MCF 10A (cell line): ENCODE measurements at regions of chr1 and their contacts with region 1.

Region 1: DNA sequence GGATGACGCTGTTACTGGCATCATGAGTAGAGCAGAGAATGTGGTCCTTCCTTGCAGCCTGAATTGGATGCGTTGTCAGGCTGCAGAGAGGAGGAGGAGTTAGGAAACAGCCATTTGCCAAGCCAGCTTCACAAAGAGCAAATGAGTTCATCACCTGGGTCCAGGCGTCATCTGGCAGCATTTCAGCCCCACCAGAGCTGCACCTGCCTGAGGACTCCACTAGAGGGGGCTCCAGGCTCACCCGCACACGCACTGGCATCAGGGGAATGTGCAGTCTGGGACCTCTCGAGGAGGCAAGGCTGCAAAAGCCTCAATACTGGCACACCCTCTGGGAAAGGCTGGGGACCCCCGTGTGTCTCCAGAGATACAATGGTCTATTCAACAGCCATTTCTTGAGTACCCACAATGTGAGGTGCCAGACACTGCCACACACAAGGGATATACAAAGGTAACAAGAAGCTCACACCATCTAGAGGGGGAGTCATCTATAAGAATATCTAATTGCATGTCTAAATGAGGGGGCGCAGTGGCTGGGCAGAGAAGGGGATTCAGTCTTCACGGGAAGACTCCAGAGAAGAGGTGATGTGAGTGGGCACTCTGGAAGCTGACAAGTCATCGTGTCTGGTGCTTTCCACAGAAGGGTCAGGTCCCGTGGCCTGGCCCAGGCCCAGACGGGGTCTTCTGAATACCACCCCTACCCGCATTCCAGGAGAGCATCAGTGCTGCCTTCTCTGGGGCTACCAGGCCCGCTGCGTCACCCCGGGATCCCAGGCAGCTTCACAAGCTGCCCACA is 53.5 kb upstream of the CNTN2 start:
- DNase-seq: peak; percentile 91
- H3K4me3 Mint-ChIP-seq: no peak overlapping the region
- H3K27ac Mint-ChIP-seq: no peak overlapping the region
- H3K4me1 Mint-ChIP-seq: no peaks in the 10 kb centered on the region
- H3K27me3 Mint-ChIP-seq: peaks cover 99% of the 10 kb centered on the region
- CTCF ChIP-seq: peak; percentile 100

Region 2: GRCh38 chr1:204975570-204976235 is 13.8 kb before region 1 on chr1:
- CTCF ChIA-PET with region 1: interaction called, 92 read pairs
- POLR2A ChIA-PET with region 1: no interaction called
- intact Hi-C with region 1: no loop called
- DNase-seq: peak; percentile 78
- H3K4me3 Mint-ChIP-seq: no peak overlapping the region
- H3K27ac Mint-ChIP-seq: no peak overlapping the region
- H3K4me1 Mint-ChIP-seq: peaks cover 8% of the 10 kb centered on the region
- H3K27me3 Mint-ChIP-seq: peaks cover 58% of the 10 kb centered on the region
- CTCF ChIP-seq: peak; percentile 99

Region 3: DNA sequence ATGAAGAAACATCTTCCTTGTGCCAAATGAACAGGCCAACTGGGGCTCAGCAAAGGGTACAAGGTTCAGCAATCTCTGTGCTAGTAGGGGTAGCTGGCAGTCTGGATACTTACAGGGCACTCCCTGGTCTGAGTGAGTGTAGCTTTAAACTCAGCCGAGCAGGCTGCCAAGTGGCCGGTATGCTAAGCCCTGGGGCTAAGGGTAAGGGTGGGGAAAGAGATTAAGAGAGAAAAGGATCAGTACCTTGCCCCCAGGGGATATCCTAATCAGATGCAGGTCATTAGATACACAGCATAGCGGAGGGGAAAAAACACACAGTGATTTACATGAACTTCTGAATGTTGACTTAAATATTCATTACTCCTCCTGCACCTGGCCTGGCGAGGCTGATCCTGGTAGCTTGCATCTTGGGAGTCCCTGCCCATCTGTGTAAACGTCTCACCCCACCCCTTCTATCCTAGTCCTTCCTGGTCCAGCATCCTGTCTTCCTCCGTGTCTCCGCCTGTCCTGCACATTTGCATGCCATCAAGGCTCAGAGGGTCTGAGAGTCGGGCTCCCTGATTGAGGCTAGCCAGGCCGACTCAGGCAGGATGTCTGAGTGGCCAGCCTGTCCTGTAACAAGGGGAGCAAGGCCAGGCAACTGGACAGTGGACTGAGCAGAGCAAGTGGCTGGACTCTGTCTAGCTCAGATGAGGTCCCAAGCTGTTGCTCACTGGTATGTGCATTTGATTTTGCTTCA is 14.1 kb after region 1 on chr1:
- CTCF ChIA-PET with region 1: interaction called, 63 read pairs
- POLR2A ChIA-PET with region 1: interaction called, 6 read pairs
- intact Hi-C with region 1: no loop called
- DNase-seq: no peak
- H3K4me3 Mint-ChIP-seq: no peak overlapping the region
- H3K27ac Mint-ChIP-seq: no peak overlapping the region
- H3K4me1 Mint-ChIP-seq: no peaks in the 10 kb centered on the region
- H3K27me3 Mint-ChIP-seq: peaks cover 66% of the 10 kb centered on the region
- CTCF ChIP-seq: no peak

Region 4: GRCh38 chr1:205013683-205014367 is 24.4 kb after region 1 on chr1:
- CTCF ChIA-PET with region 1: interaction called, 13 read pairs
- POLR2A ChIA-PET with region 1: no interaction called
- intact Hi-C with region 1: no loop called
- DNase-seq: peak; percentile 45
- H3K4me3 Mint-ChIP-seq: no peak overlapping the region
- H3K27ac Mint-ChIP-seq: no peak overlapping the region
- H3K4me1 Mint-ChIP-seq: peaks cover 6% of the 10 kb centered on the region
- H3K27me3 Mint-ChIP-seq: peaks cover 63% of the 10 kb centered on the region
- CTCF ChIP-seq: no peak

Region 5: GRCh38 chr1:205056188-205056611 is 66.7 kb after region 1 on chr1:
- CTCF ChIA-PET with region 1: interaction called, 331 read pairs
- POLR2A ChIA-PET with region 1: interaction called, 14 read pairs
- intact Hi-C with region 1: loop called (anchors 1 kb)
- DNase-seq: no peak
- H3K4me3 Mint-ChIP-seq: no peak overlapping the region
- H3K27ac Mint-ChIP-seq: no peak overlapping the region
- H3K4me1 Mint-ChIP-seq: no peaks in the 10 kb centered on the region
- H3K27me3 Mint-ChIP-seq: peaks cover 75% of the 10 kb centered on the region
- CTCF ChIP-seq: no peak

Region 6: DNA sequence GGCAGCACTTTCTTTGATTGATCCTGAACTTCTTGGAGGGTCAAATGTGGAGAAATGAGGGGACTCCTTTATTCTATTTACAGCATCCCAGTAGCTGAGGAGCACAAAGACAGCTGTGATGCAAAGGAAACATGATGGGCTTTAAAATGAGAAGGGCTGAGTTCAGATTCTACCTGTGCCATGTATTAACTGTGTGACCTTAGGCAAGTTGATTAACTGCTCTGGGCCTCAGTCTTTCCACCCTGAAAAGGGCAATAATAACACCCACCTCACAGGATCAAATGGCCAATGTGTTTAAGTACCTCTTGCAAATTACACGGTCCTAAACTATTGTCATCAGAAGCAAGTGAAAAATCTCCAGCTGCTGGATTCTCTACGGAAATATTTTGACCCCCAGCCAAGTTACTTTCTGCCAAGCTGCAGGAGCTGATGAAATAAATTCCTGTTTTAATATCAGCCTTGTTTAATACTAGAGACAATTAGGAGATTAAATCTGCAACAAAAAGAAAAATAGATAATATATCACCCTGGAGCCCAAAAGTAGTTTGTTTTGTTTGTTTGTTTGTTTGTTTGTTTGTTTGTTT is 79.1 kb after region 1 on chr1:
- CTCF ChIA-PET with region 1: interaction called, 331 read pairs
- POLR2A ChIA-PET with region 1: no interaction called
- intact Hi-C with region 1: no loop called
- DNase-seq: no peak
- H3K4me3 Mint-ChIP-seq: no peak overlapping the region
- H3K27ac Mint-ChIP-seq: no peak overlapping the region
- H3K4me1 Mint-ChIP-seq: peaks cover 18% of the 10 kb centered on the region
- H3K27me3 Mint-ChIP-seq: no peaks in the 10 kb centered on the region
- CTCF ChIP-seq: no peak

Region 7: DNA sequence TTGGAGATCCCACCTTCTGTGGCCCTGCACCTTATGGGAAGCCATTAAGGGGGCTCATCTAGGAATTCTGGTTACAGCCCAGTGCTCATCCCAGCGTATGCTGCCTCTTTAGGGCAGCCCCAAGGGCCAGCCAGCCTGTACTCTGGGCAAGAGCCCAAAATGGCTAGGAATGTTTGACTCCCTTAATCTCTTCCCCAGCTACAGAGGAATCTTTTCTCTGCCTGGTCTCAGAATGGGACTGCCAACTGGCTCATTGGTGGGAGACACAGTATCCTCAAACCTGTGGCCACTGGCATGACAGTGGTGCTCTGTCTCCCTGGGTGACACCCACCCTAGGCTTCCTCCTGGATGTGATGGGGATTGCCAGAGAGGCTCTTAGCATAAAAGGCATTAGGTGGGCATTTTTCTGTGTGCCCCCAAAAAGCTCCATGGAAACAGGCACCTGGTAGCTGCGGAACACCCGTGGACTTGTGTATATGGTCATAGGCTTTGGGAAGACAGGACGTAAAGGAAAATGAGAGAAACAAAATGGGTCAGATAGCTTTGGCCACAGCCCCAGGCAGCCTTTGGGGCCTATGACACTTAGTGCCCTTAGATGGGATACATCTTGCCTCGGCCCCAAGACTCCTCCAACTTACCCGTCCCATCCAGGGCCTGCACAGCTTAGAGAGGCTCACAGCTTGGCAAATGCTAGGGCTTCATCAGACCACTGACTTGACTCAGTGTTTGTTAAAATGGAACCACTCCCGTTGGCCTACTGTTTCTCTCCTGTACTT is 87.9 kb after region 1 on chr1:
- CTCF ChIA-PET with region 1: interaction called, 11 read pairs
- POLR2A ChIA-PET with region 1: interaction called, 3 read pairs
- intact Hi-C with region 1: no loop called
- DNase-seq: no peak
- H3K4me3 Mint-ChIP-seq: no peak overlapping the region
- H3K27ac Mint-ChIP-seq: no peak overlapping the region
- H3K4me1 Mint-ChIP-seq: peaks cover 28% of the 10 kb centered on the region
- H3K27me3 Mint-ChIP-seq: no peaks in the 10 kb centered on the region
- CTCF ChIP-seq: no peak